ENCODE measurements at regions of chr20 and their contacts with region 1.

Region 1: GRCh38 chr20:14878768-14879697 is 541.6 kb upstream of the FLRT3 start:
- DNase-seq: peak; percentile 95
- H3K4me3 ChIP-seq: no peak overlapping the region
- H3K27ac ChIP-seq: peak overlapping the region; percentile 85
- H3K4me1 ChIP-seq: peaks cover 47% of the 10 kb centered on the region
- H3K27me3 ChIP-seq: no peaks in the 10 kb centered on the region
- CTCF ChIP-seq: no peak

Region 2: GRCh38 chr20:14288341-14289330 is 590.4 kb before region 1 on chr20:
- CTCF ChIA-PET with region 1: no interaction called
- dilution Hi-C with region 1: no loop called
- in situ Hi-C with region 1: no loop called
- intact Hi-C with region 1: loop called (anchors 5 kb)
- DNase-seq: peak; percentile 99
- H3K4me3 ChIP-seq: peak overlapping the region in 1 of 3 experiments; percentile 1
- H3K27ac ChIP-seq: peak overlapping the region; percentile 100
- H3K4me1 ChIP-seq: peaks cover 57% of the 10 kb centered on the region
- H3K27me3 ChIP-seq: no peaks in the 10 kb centered on the region
- CTCF ChIP-seq: no peak

Region 3: GRCh38 chr20:14845199-14846160 is 33.6 kb before region 1 on chr20:
- CTCF ChIA-PET with region 1: no interaction called
- dilution Hi-C with region 1: no loop called
- in situ Hi-C with region 1: no loop called
- intact Hi-C with region 1: loop called (anchors 1 kb)
- DNase-seq: peak; percentile 94
- H3K4me3 ChIP-seq: no peak overlapping the region
- H3K27ac ChIP-seq: peak overlapping the region; percentile 61
- H3K4me1 ChIP-seq: peaks cover 18% of the 10 kb centered on the region
- H3K27me3 ChIP-seq: no peaks in the 10 kb centered on the region
- CTCF ChIP-seq: no peak

Region 4: GRCh38 chr20:14919480-14920440 is 40.7 kb after region 1 on chr20:
- CTCF ChIA-PET with region 1: no interaction called
- dilution Hi-C with region 1: no loop called
- in situ Hi-C with region 1: no loop called
- intact Hi-C with region 1: loop called (anchors 5 kb)
- DNase-seq: peak; percentile 72
- H3K4me3 ChIP-seq: peak overlapping the region in 1 of 3 experiments; percentile 2
- H3K27ac ChIP-seq: no peak overlapping the region
- H3K4me1 ChIP-seq: peaks cover 13% of the 10 kb centered on the region
- H3K27me3 ChIP-seq: no peaks in the 10 kb centered on the region
- CTCF ChIP-seq: peak in 1 of 2 donors; percentile 10

Measured in mammary epithelial cell (primary cell).